ENCODE measurements at regions of chr7 and their contacts with region 1.

Region 1: DNA sequence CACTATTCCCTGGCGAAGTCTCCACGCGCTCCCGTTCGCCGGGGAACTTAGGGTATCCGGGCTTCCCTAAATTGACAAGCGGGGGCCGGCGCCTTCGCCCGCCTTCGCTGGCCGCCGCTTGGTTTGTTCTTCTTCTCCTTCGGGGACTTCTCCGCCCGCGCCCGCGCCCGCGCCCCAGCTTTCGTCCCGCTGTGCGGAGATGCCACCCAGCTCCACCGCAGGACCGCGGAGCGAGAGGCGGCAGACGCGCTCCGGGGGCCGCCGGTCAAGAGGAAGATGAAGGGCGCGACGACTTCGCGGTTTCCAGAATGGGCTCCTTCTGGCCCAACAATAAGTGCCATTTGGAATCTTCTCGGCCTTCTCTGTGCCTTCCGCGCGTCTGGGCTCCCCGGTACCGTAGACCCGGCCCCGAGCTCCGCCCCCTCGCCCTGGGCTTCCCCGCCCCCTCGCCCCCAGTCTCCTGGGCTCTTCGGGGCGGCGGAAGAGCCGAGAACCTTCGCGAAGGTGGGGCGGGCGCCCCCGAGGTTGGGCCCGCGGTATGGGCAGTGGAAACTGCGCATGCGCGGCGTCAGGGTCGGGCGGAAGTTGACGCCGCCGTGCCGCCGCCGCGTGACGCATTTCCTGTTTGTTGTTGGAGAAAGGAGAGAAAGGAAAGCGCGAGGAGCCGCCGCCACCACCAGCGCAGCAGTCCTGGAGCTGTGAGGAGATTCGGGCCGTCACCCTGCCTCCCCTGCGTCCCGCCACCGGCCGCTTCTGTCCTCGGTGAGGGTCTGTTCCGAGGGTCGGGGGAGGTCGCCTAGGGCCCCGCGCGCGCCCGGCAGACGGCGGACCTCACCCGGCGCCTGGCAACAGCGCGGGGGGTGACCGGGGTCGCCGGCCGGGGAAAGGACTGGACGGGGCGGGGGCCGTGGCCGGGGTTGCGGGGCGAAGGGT is at the start of gene DNAJB6:
- DNase-seq: peak; percentile 90 to 91
- ATAC-seq: peak; percentile 79 to 85
- H3K4me3 ChIP-seq: peak within 1 kb of the TSS; percentile 83 to 99 (median 84)
- H3K27ac ChIP-seq: peak within 1 kb of the TSS; percentile 96 to 100 (median 96)
- H3K4me1 ChIP-seq: peaks cover 35 to 38% of the 10 kb centered on the region in 2 donors
- H3K27me3 ChIP-seq: no peaks in the 10 kb centered on the region
- CTCF ChIP-seq: no peak
- POLR2A ChIP-seq: peak; percentile 99
- total RNA-seq, gene DNAJB6: 130 to 269 (median 188) TPM

Region 2: GRCh38 chr7:156232931-156233705 is 1103.5 kb before region 1 on chr7:
- in situ Hi-C with region 1: no loop called
- intact Hi-C with region 1: no loop called
- DNase-seq: no peak
- ATAC-seq: no peak
- H3K4me3 ChIP-seq: no peak overlapping the region
- H3K27ac ChIP-seq: no peak overlapping the region
- H3K4me1 ChIP-seq: no peaks in the 10 kb centered on the region
- H3K27me3 ChIP-seq: no peaks in the 10 kb centered on the region
- CTCF ChIP-seq: no peak
- POLR2A ChIP-seq: no peak

Region 3: GRCh38 chr7:157138424-157139110 is 198.1 kb before region 1 on chr7 and contains the start of gene UBE3C:
- in situ Hi-C with region 1: no loop called
- intact Hi-C with region 1: loop called (anchors 2 kb)
- DNase-seq: peak; percentile 72 to 86
- ATAC-seq: peak; percentile 85
- H3K4me3 ChIP-seq: peak within 1 kb of the TSS; percentile 79 to 93 (median 80)
- H3K27ac ChIP-seq: peak within 1 kb of the TSS; percentile 81 to 94 (median 91)
- H3K4me1 ChIP-seq: peaks cover 30 to 42% of the 10 kb centered on the region in 2 donors
- H3K27me3 ChIP-seq: no peaks in the 10 kb centered on the region
- CTCF ChIP-seq: no peak
- POLR2A ChIP-seq: peak; percentile 79 to 89
- total RNA-seq, gene UBE3C: 64.4 to 123 (median 76.3) TPM

Region 4: GRCh38 chr7:157273208-157274093 is 63.2 kb before region 1 on chr7:
- in situ Hi-C with region 1: no loop called
- intact Hi-C with region 1: loop called (anchors 5 kb)
- DNase-seq: peak; percentile 52 to 75
- ATAC-seq: peak; percentile 20 to 68
- H3K4me3 ChIP-seq: peak overlapping the region in 1 of 4 donors; percentile 30
- H3K27ac ChIP-seq: peak overlapping the region; percentile 76 to 82 (median 81)
- H3K4me1 ChIP-seq: peaks cover 21 to 22% of the 10 kb centered on the region in 2 donors
- H3K27me3 ChIP-seq: peaks cover 0 to 9% (median 7%) of the 10 kb centered on the region in 3 donors
- CTCF ChIP-seq: peak; percentile 94 to 99 (median 95)
- POLR2A ChIP-seq: no peak

Region 5: DNA sequence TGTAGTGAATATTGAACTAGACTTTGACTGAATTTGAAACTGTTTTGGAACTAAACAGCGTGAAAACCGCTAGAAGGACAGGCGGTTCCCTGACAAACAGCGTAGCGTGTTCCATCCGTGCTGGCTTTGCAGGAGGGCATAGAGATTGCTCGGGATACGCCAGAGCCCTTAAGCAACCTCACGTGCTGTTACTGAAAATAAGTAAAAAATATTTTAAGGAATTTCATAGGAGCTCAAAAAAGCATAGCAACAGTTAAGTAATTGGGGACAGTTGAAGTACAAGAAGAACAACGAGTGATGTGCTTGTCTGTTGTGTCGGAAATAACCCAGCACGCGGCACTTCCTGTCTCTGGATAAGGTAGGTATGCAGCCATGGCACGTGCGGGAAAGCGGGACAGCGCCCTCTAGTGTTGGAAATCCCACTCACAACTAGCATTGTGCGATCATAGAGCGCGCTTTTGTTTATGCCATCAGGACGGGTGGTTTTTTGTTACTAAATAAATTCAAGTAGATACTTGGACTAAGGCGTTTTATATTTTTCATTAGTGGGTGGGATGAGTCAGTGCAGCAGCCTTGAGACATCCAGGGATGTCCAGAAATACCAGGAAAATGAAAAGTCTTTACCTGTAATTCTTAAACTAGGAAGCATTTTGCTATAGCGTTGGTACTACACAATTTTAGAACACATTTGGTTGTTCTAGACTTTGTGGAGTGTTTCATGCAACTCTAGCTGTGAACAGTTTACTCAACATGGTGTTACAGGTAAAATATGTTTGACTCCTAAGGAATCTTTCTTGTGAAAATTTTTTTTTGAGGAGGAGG is 50.5 kb after region 1 on chr7:
- in situ Hi-C with region 1: loop called in 2 of 4 experiments (anchors 10 kb)
- intact Hi-C with region 1: no loop called
- DNase-seq: peak; percentile 76 to 87
- ATAC-seq: peak; percentile 84 to 88
- H3K4me3 ChIP-seq: no peak overlapping the region
- H3K27ac ChIP-seq: peak overlapping the region; percentile 72 to 77 (median 74)
- H3K4me1 ChIP-seq: peaks cover 30 to 34% of the 10 kb centered on the region in 2 donors
- H3K27me3 ChIP-seq: no peaks in the 10 kb centered on the region
- CTCF ChIP-seq: peak; percentile 87 to 95 (median 90)
- POLR2A ChIP-seq: no peak

Region 6: DNA sequence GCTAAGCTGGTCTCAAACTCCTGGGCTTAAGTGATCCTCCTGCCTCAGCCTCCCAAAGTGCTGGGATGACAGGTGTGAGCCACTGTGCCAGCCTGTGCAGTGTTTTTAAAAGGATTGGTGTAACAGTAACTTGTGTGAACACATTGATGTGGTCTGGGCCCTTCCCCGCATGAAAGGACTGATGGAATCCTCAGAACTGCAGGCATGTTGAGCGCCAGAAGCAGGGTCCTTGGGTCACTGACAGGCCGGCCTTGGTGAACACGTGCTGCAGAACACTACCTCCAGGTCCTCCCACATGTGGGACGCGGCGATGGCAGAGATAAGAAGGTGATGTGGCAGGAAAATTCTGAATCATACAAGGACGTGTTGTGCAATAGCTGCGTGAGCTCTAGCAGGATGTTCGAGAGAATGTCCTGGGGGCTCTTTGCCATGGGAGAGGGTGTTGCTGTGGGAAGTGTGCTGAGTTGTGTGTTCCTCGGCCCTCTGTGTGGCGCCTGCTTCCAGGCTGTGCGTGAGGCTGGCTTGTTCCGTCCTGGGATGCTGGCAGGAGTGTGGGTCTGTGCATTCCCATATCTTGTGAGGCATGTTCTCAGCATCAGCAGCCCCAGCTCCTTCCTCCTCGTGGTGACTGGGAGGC is 68.3 kb after region 1 on chr7:
- in situ Hi-C with region 1: no loop called
- intact Hi-C with region 1: loop called (anchors 1 kb)
- DNase-seq: peak in 1 of 2 donors; percentile 59
- ATAC-seq: peak; percentile 34 to 47
- H3K4me3 ChIP-seq: no peak overlapping the region
- H3K27ac ChIP-seq: peak overlapping the region; percentile 64 to 81 (median 77)
- H3K4me1 ChIP-seq: peaks cover 23 to 37% of the 10 kb centered on the region in 2 donors
- H3K27me3 ChIP-seq: no peaks in the 10 kb centered on the region
- CTCF ChIP-seq: no peak
- POLR2A ChIP-seq: no peak

Measured in gastrocnemius medialis (tissue), 4 donors.